HAP-1 (cell line): ENCODE measurements at regions of chr9 and their contacts with region 1.

Region 1: DNA sequence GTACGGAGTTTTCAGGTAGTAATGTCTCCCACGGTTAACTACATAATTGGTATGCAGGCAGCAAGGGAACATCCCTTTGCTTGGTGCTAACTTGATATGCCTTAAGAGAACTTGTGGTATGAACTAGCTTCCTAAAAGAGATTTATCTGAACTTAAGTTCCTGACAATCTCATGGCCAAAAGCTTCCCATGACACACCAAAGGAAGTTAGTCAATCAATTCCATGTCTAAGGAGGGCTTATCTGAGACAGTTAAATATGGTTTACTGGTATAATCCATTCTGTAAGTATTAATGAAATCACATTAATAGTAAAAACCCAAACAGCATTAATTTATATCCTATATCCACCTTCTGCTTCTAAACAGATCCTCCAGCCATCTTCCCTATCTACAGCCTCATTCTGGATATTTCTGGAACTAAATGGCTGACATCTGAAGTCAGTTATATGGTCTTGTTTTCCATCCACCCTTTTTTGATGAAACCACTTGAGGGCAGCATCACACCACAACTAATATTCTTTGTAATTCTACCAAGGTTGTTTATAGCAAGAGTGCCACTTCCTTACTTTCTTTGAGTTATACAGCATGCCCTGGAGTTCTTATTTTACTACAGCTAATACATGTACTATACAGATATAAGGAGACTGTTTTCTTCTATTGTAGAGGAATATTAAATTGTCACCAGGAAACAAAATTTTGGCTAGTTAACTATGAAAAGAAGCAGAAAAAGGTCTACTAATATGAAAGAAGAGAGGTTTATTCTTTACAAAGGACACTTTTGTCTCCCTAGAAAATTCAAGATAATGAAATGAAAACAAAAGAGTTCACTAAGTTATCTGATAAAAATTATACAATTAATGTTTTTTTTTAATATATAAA is 34.7 kb downstream of the SHOC1 start:
- DNase-seq: peak; percentile 56 to 59
- H3K4me3 ChIP-seq: no peak overlapping the region
- H3K4me1 ChIP-seq: no peaks in the 10 kb centered on the region
- H3K27me3 ChIP-seq: no peaks in the 10 kb centered on the region

Region 2: GRCh38 chr9:112074250-112075008 is 314.4 kb after region 1 on chr9:
- in situ Hi-C with region 1: loop called (anchors 5 kb)
- DNase-seq: peak; percentile 50 to 74
- H3K4me3 ChIP-seq: no peak overlapping the region
- H3K4me1 ChIP-seq: no peaks in the 10 kb centered on the region
- H3K27me3 ChIP-seq: no peaks in the 10 kb centered on the region

Region 3: DNA sequence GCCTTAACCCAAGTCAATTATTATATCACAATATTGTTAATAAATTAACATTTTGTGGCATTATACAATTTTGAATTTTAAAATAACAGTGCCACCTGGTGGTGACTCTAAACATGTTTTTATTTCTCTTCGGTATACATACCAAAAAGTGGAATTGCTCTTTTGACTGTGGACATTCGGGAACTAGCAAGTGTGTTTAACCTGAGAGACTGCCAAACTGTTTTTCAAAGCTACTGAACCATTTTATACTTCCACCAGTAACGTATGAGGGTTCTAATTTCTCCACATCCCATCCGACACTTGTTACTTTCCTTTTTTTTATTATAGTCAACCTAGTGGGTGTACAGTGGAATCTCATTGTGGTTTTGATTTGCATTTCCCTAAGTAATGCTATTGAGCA is 601.6 kb after region 1 on chr9:
- in situ Hi-C with region 1: loop called (anchors 25 kb)
- DNase-seq: peak in 1 of 2 experiments; percentile 46
- H3K4me3 ChIP-seq: no peak overlapping the region
- H3K4me1 ChIP-seq: no peaks in the 10 kb centered on the region
- H3K27me3 ChIP-seq: peaks cover 2% of the 10 kb centered on the region; the same call in 1 of the 2 replicates